ENCODE measurements at regions of chr1 and their contacts with region 1.

Region 1: DNA sequence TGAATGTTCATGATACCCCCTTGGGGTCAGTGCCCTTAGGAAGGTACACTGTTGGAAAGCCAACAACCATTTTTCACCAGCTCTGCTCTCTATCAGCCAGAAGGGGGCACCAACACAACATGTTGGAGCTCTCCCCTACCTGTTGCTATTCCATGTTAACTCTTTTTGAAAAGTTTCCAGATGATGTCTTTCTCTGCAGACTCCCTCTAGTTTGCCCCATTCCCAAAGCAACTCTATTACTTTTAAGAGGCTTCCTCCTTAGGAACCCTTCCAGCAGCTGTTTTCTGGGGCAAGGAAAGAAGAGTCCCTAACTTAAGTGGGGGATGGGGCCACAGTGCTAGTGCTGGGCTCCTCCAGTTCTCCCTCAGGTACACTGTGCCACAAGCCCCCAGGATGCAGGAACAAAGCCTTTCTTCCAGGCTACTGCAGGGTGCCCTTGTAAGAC is 22.9 kb upstream of the NDC1 start:
- DNase-seq: no peak
- ATAC-seq: peak; percentile 58 to 81 (median 74)
- H3K4me3 ChIP-seq: no peak overlapping the region
- H3K27ac ChIP-seq: no peak overlapping the region
- H3K4me1 ChIP-seq: no peaks in the 10 kb centered on the region
- H3K27me3 ChIP-seq: no peaks in the 10 kb centered on the region
- CTCF ChIP-seq: peak; percentile 79

Region 2: DNA sequence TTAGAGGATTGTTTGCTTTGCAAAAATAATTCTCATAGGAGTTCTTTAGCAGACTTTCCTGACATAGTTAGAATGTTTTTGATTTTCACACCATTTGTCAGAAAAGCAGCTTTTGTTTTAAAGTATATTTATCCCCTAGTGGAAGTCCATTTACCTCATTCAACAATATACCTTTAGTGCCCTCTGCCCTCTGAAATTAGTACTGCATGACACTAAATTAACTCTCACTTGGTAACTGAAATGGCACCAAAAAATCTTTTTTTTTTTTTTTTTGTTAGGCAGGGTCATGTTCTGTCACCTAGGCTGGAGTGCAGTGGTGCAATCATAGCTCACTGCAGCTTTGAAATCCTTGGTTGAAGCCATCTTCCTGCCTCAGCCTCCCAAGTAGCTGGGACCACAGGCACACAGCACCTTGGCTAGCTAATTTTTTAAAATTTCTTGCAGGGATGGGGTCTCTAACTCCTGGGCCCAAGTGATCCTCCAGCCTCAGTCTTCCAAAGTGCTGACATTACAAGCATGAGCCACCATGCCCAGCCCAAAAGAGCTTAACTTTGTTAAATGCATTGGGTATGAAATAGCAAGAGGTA is 98.8 kb after region 1 on chr1:
- intact Hi-C with region 1: loop called (anchors 5 kb)
- DNase-seq: no peak
- ATAC-seq: peak in 1 of 4 donors; percentile 58
- H3K4me3 ChIP-seq: no peak overlapping the region
- H3K27ac ChIP-seq: no peak overlapping the region
- H3K4me1 ChIP-seq: no peaks in the 10 kb centered on the region
- H3K27me3 ChIP-seq: no peaks in the 10 kb centered on the region
- CTCF ChIP-seq: peak; percentile 46

Region 3: GRCh38 chr1:54037476-54037875 is 176.5 kb after region 1 on chr1:
- intact Hi-C with region 1: loop called in 1 of 2 experiments (anchors 10 kb)
- DNase-seq: no peak
- ATAC-seq: no peak
- H3K4me3 ChIP-seq: no peak overlapping the region
- H3K27ac ChIP-seq: no peak overlapping the region
- H3K4me1 ChIP-seq: no peaks in the 10 kb centered on the region
- H3K27me3 ChIP-seq: no peaks in the 10 kb centered on the region
- CTCF ChIP-seq: no peak

Measured in psoas muscle (tissue), 8 donors.